ENCODE measurements at regions of chr4 and their contacts with region 1.

Region 1: DNA sequence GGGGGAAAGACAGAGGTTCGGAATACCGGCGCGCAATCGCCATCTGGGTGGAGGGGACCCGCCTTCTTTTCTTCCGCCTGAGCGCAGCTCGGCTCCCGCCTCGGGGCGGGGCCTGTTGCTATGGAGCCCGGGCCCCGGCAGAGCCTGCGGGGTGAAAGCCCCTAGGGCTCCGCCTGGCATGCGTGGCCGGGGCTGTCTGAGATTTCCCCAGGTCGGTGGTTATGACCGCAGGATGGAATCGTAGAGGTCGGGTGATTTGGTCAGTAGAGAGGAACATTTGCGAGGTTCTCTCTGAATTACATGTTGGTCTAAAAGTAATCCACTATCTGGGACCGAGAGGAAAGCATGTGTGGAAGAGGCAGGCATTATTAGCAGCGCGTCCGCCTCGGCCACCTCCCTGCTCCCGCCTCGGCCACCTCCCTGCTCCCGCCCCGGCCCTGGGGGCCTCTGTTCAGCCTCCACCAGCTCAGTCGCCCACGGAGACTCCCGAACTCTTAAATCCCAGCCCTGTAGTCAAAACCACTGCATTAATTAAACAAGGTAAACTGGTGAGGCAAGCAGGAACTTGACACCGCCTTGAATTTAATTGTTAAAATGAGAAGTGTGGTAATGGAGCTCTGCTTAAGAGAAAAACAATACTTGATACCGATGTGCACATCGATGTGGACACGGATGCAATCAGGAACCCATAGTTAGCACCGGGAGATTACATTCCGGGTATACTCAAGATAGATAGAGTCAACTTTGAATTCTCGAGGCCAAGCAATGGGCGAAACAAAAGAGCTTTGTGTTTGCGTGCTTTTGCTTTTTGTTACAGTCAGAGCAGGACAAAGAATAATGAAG is 45.2 kb downstream of the TRIM2 start:
- DNase-seq: peak; percentile 88 to 92 (median 92)
- ATAC-seq: peak; percentile 83
- H3K4me3 ChIP-seq: no peak overlapping the region
- H3K4me1 ChIP-seq: peaks cover 33% of the 10 kb centered on the region
- CTCF ChIP-seq: no peak

Region 2: GRCh38 chr4:153116291-153116680 is 133.1 kb before region 1 on chr4:
- intact Hi-C with region 1: no loop called
- DNase-seq: no peak
- ATAC-seq: no peak
- H3K4me3 ChIP-seq: no peak overlapping the region
- H3K4me1 ChIP-seq: no peaks in the 10 kb centered on the region
- CTCF ChIP-seq: no peak

Region 3: GRCh38 chr4:153204247-153205027 is 45.0 kb before region 1 on chr4 and contains the start of gene TRIM2:
- intact Hi-C with region 1: loop called in 1 of 2 experiments (anchors 5 kb)
- DNase-seq: peak; percentile 73 to 90 (median 78)
- ATAC-seq: peak; percentile 67
- H3K4me3 ChIP-seq: peak within 1 kb of the TSS; percentile 12
- H3K4me1 ChIP-seq: peaks cover 18% of the 10 kb centered on the region
- CTCF ChIP-seq: no peak
- total RNA-seq, gene TRIM2: 96.4 to 167 (median 154) TPM

Measured in mucosa of descending colon (tissue), 3 donors.